Naive thymus-derived CD4-positive, alpha-beta T cell (primary cell): ENCODE measurements at regions of chr9 and their contacts with region 1.

Region 1: GRCh38 chr9:5832543-5833529 is at the start of gene ERMP1:
- DNase-seq: peak; percentile 83 to 94 (median 91)
- ATAC-seq: peak; percentile 95
- H3K4me3 ChIP-seq: peak within 1 kb of the TSS; percentile 85
- H3K4me3 Mint-ChIP-seq: peak within 1 kb of the TSS; percentile 91 to 99 (median 95)
- H3K27ac ChIP-seq: peak within 1 kb of the TSS; percentile 60
- H3K27ac Mint-ChIP-seq: peak within 1 kb of the TSS; percentile 79 to 96 (median 89)
- H3K4me1 ChIP-seq: peaks cover 25 to 33% of the 10 kb centered on the region in 2 donors
- H3K4me1 Mint-ChIP-seq: peaks cover 28 to 71% (median 60%) of the 10 kb centered on the region in 7 donors
- H3K27me3 ChIP-seq: no peaks in the 10 kb centered on the region
- H3K27me3 Mint-ChIP-seq: no peaks in the 10 kb centered on the region
- total RNA-seq, gene ERMP1: 9.5 to 37.1 (median 20.0) TPM

Region 2: DNA sequence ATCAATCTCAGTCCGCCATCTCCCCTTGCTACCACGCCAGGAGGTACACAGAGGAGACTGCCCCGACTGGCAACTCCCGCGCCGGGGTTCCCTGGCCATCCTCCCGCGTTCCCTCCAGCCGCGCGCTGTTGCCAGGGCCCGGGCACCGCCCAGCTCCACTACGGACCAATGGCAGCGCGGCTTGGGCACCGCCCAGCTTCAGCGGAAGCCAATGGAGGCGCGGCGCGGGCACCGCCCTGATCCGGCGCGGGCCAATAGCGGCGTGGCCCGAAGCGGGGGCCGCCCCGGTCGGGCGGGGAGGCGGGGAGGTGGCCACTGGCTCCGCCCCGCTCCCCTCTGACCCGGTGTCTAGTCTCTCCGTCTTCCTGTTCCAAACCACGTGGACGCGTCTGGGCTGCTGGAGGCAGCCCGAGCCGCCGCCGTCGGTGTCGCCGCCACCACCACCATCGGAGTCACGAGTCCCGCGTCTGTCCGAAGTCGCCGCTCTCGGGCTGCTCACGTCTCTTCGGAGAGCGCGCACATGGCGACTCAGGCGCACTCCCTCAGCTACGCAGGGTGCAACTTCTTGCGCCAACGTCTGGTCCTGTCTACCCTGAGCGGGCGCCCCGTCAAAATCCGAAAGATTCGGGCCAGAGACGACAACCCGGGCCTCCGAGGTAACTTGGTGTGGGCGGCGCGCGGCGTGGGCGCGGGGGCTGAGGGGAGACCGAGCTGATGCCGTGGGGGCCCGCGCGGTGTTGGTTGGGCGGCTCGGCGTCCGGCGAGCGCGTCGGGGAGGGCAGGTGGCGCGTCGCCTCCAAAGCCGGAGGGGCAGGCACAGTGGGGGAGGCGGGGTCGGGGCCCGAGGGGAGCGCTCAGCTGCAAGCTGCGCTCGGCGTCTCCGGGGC is 1040.0 kb before region 1 on chr9 and contains the start of gene RCL1:
- CTCF ChIA-PET with region 1: no interaction called
- POLR2A ChIA-PET with region 1: no interaction called
- intact Hi-C with region 1: loop called in 1 of 2 experiments (anchors 2 kb)
- DNase-seq: peak; percentile 93 to 98 (median 97)
- ATAC-seq: peak; percentile 96
- H3K4me3 ChIP-seq: peak within 1 kb of the TSS; percentile 99
- H3K4me3 Mint-ChIP-seq: peak within 1 kb of the TSS; percentile 83 to 97 (median 94)
- H3K27ac ChIP-seq: peak within 1 kb of the TSS; percentile 80
- H3K27ac Mint-ChIP-seq: peak within 1 kb of the TSS; percentile 71 to 97 (median 94)
- H3K4me1 ChIP-seq: peaks cover 4 to 18% of the 10 kb centered on the region in 2 donors
- H3K4me1 Mint-ChIP-seq: peaks cover 21 to 56% (median 45%) of the 10 kb centered on the region in 7 donors
- H3K27me3 ChIP-seq: no peaks in the 10 kb centered on the region
- H3K27me3 Mint-ChIP-seq: peaks cover 0 to 11% (median 0%) of the 10 kb centered on the region in 5 donors
- total RNA-seq, gene RCL1: 21.5 to 39.4 (median 23.4) TPM

Region 3: DNA sequence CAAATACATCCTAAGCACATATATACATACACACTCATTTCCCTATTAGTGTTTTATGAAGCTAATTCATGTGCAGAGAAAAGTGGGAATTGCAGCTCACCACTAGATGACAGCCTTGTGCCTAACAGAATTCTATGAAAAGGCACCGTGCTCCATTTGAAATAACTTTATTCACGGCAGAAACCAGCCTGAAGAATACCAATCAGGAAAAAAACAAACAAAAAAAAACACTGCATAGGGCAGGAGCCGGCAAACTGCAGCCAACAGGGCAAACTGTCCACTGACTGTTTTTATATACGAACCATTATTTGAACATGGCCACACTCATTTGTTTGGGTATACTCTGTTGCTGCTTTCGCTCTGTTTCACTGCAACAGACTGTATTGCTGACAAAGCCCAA is 33.5 kb before region 1 on chr9:
- CTCF ChIA-PET with region 1: interaction called, 3 read pairs
- POLR2A ChIA-PET with region 1: interaction called, 5 read pairs
- intact Hi-C with region 1: loop called in 1 of 2 experiments (anchors 2 kb)
- DNase-seq: peak in 5 of 9 donors; percentile 7 to 34 (median 21)
- ATAC-seq: peak; percentile 38
- H3K4me3 ChIP-seq: no peak overlapping the region
- H3K4me3 Mint-ChIP-seq: peak overlapping the region in 2 of 10 donors; percentile 6 to 23
- H3K27ac ChIP-seq: no peak overlapping the region
- H3K27ac Mint-ChIP-seq: peak overlapping the region in 4 of 9 donors; percentile 40 to 67 (median 58)
- H3K4me1 ChIP-seq: peaks cover 5% of the 10 kb centered on the region in 2 donors
- H3K4me1 Mint-ChIP-seq: peaks cover 4 to 36% (median 23%) of the 10 kb centered on the region in 7 donors
- H3K27me3 ChIP-seq: no peaks in the 10 kb centered on the region
- H3K27me3 Mint-ChIP-seq: no peaks in the 10 kb centered on the region

Region 4: GRCh38 chr9:5851445-5851844 is 18.6 kb after region 1 on chr9:
- CTCF ChIA-PET with region 1: interaction called, 3 read pairs
- POLR2A ChIA-PET with region 1: interaction called, 5 read pairs
- intact Hi-C with region 1: loop called in 1 of 2 experiments (anchors 2 kb)
- DNase-seq: peak in 1 of 9 donors; percentile 40
- ATAC-seq: peak; percentile 86
- H3K4me3 ChIP-seq: no peak overlapping the region
- H3K4me3 Mint-ChIP-seq: peak overlapping the region in 3 of 10 donors; percentile 19 to 44 (median 23)
- H3K27ac ChIP-seq: no peak overlapping the region
- H3K27ac Mint-ChIP-seq: peak overlapping the region; percentile 11 to 83 (median 53)
- H3K4me1 ChIP-seq: peaks cover 0 to 11% of the 10 kb centered on the region in 2 donors
- H3K4me1 Mint-ChIP-seq: peaks cover 16 to 63% (median 39%) of the 10 kb centered on the region in 7 donors
- H3K27me3 ChIP-seq: no peaks in the 10 kb centered on the region
- H3K27me3 Mint-ChIP-seq: no peaks in the 10 kb centered on the region

Region 5: DNA sequence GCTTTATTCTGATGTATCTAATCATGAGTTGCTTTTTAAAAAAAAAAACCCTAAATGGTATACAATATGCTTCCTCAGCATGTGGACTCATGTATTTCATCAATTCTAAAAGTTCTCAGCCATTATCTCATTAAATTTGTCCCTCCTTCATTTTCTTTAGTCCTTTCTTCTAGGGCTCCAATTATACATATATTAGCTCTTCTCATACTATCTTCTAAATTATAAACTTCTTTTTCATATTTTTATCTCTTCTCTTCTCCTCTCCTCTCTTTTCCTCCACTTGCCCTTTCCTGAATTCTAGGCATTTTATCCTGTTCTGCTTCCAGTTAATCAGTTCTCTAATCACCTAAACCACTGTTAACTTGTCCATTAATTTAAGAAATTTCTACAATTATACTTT is 327.7 kb after region 1 on chr9:
- CTCF ChIA-PET with region 1: no interaction called
- POLR2A ChIA-PET with region 1: no interaction called
- intact Hi-C with region 1: no loop called
- DNase-seq: no peak
- ATAC-seq: no peak
- H3K4me3 ChIP-seq: no peak overlapping the region
- H3K4me3 Mint-ChIP-seq: no peak overlapping the region
- H3K27ac ChIP-seq: no peak overlapping the region
- H3K27ac Mint-ChIP-seq: no peak overlapping the region
- H3K4me1 ChIP-seq: no peaks in the 10 kb centered on the region
- H3K4me1 Mint-ChIP-seq: no peaks in the 10 kb centered on the region
- H3K27me3 ChIP-seq: no peaks in the 10 kb centered on the region
- H3K27me3 Mint-ChIP-seq: peaks cover 4 to 22% (median 6%) of the 10 kb centered on the region in 5 donors

Region 6: DNA sequence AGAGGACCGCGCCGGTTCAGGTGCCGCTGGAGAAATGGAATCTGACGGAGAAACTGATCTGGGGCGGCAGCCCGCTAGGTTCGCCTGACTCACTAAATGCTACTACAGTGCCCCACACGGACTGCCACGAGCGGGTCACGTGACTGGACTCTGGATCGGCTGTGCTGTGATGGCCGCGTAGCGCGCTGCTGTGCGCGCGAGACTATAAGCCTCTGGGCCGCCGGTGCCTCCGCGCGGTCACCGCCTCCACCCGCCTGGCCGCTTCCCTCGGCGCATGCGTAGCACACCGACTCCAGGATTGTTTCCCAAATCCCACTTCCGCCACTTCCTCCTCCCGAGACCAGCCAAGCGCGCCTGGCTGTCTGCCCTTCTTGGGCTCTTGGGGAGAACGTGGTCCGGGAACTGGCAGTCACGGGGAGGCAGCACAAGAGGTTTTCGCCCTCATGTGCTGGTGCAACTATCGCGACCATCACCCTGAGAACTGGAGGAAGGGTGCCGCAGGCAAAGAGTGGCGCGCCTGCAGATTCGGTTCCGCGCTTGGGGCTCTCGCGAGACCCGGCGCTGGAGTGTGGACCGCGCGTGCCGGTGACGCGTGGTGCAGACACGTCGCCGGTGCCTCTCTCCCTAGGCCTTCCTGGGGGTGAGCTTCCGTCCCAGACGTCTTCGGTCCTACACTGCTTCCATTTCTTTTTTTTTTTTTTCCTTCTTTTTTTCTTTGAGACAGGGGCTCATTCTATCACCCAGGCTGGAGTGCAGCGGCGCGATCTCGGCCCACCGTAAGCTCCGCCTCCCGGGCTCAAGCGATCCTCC is 848.5 kb after region 1 on chr9:
- CTCF ChIA-PET with region 1: no interaction called
- POLR2A ChIA-PET with region 1: no interaction called
- intact Hi-C with region 1: loop called in 1 of 2 experiments (anchors 2 kb)
- DNase-seq: peak; percentile 71 to 95 (median 90)
- ATAC-seq: peak; percentile 90
- H3K4me3 ChIP-seq: peak overlapping the region; percentile 89
- H3K4me3 Mint-ChIP-seq: peak overlapping the region; percentile 88 to 98 (median 95)
- H3K27ac ChIP-seq: peak overlapping the region; percentile 91
- H3K27ac Mint-ChIP-seq: peak overlapping the region; percentile 97 to 100 (median 99)
- H3K4me1 ChIP-seq: peaks cover 0 to 6% of the 10 kb centered on the region in 2 donors
- H3K4me1 Mint-ChIP-seq: peaks cover 7 to 31% (median 20%) of the 10 kb centered on the region in 7 donors
- H3K27me3 ChIP-seq: no peaks in the 10 kb centered on the region
- H3K27me3 Mint-ChIP-seq: no peaks in the 10 kb centered on the region